Activated B cell treated with CpG ODN at 0.5 μM for 24 hours (primary cell): ENCODE measurements at regions of chr6 and their contacts with region 1.

Region 1: GRCh38 chr6:26054857-26055669 is 32.2 kb upstream of the HFE start:
- DNase-seq: peak; percentile 63
- ATAC-seq: peak; percentile 65
- H3K4me3 Mint-ChIP-seq: peak overlapping the region; percentile 97
- H3K27ac Mint-ChIP-seq: peak overlapping the region; percentile 100
- H3K4me1 Mint-ChIP-seq: peaks cover 20% of the 10 kb centered on the region
- H3K27me3 Mint-ChIP-seq: no peaks in the 10 kb centered on the region
- CTCF ChIP-seq: no peak

Region 2: GRCh38 chr6:25499615-25500235 is 555.3 kb before region 1 on chr6:
- CTCF ChIA-PET with region 1: no interaction called
- POLR2A ChIA-PET with region 1: no interaction called
- intact Hi-C with region 1: no loop called
- DNase-seq: no peak
- ATAC-seq: no peak
- H3K4me3 Mint-ChIP-seq: no peak overlapping the region
- H3K27ac Mint-ChIP-seq: no peak overlapping the region
- H3K4me1 Mint-ChIP-seq: no peaks in the 10 kb centered on the region
- H3K27me3 Mint-ChIP-seq: no peaks in the 10 kb centered on the region
- CTCF ChIP-seq: no peak

Region 3: DNA sequence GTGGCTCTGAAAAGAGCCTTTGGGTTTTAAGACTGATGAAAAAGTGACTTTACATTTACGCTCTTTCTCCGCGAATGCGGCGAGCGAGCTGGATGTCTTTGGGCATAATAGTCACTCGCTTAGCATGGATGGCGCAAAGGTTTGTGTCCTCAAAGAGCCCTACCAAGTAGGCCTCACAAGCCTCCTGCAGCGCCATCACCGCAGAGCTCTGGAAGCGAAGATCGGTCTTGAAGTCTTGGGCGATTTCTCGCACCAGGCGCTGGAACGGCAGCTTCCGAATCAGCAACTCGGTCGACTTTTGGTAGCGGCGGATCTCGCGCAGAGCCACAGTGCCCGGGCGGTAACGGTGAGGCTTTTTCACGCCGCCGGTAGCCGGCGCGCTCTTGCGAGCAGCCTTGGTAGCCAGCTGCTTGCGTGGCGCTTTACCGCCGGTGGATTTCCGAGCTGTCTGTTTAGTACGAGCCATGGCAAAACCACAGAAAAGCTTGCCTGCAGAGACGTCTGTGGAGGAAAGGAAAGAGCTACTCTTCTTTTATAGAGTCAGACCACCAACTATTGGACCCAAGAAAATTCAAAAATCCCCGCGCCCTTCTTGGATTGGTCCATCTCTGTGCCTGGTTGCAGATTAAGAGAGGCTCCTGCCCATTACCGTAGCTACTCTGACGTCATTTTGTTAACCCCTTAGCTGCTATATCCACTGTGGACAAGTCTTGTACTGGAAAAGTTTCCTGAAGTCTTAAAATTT is 23.3 kb before region 1 on chr6:
- CTCF ChIA-PET with region 1: interaction called, 7 read pairs
- POLR2A ChIA-PET with region 1: interaction called, 104 read pairs
- intact Hi-C with region 1: loop called (anchors 1 kb)
- DNase-seq: peak; percentile 55
- ATAC-seq: peak; percentile 62
- H3K4me3 Mint-ChIP-seq: peak overlapping the region; percentile 93
- H3K27ac Mint-ChIP-seq: peak overlapping the region; percentile 98
- H3K4me1 Mint-ChIP-seq: peaks cover 40% of the 10 kb centered on the region
- H3K27me3 Mint-ChIP-seq: peaks cover 2% of the 10 kb centered on the region
- CTCF ChIP-seq: no peak

Region 4: GRCh38 chr6:26087284-26088115 is 32.4 kb after region 1 on chr6 and contains the start of gene HFE:
- CTCF ChIA-PET with region 1: interaction called, 349 read pairs
- POLR2A ChIA-PET with region 1: interaction called, 37 read pairs
- intact Hi-C with region 1: no loop called
- DNase-seq: peak; percentile 46
- ATAC-seq: peak; percentile 69
- H3K4me3 Mint-ChIP-seq: peak within 1 kb of the TSS; percentile 89
- H3K27ac Mint-ChIP-seq: peak within 1 kb of the TSS; percentile 82
- H3K4me1 Mint-ChIP-seq: peaks cover 43% of the 10 kb centered on the region
- H3K27me3 Mint-ChIP-seq: no peaks in the 10 kb centered on the region
- CTCF ChIP-seq: no peak
- total RNA-seq, gene HFE: 0.98 and 1.1 TPM in 2 replicates

Region 5: DNA sequence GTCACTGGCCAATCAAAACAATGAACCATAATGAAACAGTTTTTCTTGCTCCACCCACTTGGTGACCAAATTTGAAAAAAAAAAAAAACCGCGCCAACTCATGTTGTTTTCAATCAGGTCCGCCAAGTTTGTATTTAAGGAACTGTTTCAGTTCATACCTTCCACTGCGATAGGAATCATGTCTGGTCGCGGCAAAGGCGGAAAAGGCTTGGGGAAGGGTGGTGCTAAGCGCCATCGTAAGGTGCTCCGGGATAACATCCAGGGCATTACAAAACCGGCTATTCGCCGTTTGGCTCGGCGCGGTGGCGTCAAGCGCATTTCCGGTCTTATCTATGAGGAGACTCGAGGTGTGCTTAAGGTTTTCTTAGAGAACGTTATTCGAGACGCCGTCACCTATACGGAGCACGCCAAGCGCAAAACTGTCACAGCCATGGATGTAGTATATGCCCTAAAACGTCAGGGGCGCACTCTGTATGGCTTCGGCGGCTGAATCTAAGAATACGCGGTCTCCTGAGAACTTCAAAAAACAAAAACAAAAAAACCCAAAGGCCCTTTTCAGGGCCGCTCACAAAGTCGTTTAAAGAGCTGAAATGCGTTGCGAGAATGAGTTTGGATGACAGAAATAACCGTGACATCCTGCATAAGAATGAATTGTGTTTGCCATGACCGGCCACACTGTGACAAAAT is 48.9 kb after region 1 on chr6:
- CTCF ChIA-PET with region 1: interaction called, 349 read pairs
- POLR2A ChIA-PET with region 1: interaction called, 175 read pairs
- intact Hi-C with region 1: loop called (anchors 1 kb)
- DNase-seq: peak; percentile 83
- ATAC-seq: peak; percentile 85
- H3K4me3 Mint-ChIP-seq: peak overlapping the region; percentile 85
- H3K27ac Mint-ChIP-seq: peak overlapping the region; percentile 98
- H3K4me1 Mint-ChIP-seq: peaks cover 12% of the 10 kb centered on the region
- H3K27me3 Mint-ChIP-seq: peaks cover 3% of the 10 kb centered on the region
- CTCF ChIP-seq: no peak

Region 6: DNA sequence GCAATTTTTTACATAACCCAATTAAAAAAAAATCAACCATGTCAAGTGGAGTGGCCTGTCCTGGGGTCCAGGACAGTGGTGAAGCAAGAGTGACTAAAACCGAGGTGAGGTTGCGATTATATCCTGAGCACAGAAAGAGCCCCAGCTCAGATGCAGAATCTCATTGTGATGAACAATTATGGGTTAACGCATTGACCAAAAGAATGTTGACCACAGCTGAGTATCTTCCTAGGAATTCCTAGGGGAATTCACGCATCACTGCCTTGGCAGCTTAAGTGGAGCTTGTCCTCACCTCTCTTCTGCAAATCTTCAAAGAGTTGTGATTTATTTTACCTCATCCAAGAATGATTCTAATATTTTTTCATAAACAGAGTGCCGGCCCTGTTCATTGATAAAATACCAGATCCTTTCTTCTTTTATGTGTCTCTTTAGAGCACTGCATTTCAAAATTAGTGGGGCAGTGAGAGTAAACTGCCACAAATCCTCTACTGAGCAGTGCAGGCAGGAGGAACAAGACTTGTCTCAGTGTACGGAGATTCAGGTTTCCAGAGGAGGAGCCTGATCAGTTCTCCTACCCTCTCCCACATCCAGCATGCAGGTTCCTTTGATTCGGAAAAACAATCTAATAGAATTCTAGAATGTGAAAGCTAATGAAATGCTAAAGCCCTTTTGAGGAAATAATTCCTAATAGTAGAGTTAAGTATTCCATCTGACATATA is 1477.9 kb after region 1 on chr6:
- CTCF ChIA-PET with region 1: no interaction called
- POLR2A ChIA-PET with region 1: no interaction called
- intact Hi-C with region 1: no loop called
- DNase-seq: no peak
- ATAC-seq: no peak
- H3K4me3 Mint-ChIP-seq: no peak overlapping the region
- H3K27ac Mint-ChIP-seq: no peak overlapping the region
- H3K4me1 Mint-ChIP-seq: no peaks in the 10 kb centered on the region
- H3K27me3 Mint-ChIP-seq: peaks cover 59% of the 10 kb centered on the region
- CTCF ChIP-seq: no peak

Region 7: DNA sequence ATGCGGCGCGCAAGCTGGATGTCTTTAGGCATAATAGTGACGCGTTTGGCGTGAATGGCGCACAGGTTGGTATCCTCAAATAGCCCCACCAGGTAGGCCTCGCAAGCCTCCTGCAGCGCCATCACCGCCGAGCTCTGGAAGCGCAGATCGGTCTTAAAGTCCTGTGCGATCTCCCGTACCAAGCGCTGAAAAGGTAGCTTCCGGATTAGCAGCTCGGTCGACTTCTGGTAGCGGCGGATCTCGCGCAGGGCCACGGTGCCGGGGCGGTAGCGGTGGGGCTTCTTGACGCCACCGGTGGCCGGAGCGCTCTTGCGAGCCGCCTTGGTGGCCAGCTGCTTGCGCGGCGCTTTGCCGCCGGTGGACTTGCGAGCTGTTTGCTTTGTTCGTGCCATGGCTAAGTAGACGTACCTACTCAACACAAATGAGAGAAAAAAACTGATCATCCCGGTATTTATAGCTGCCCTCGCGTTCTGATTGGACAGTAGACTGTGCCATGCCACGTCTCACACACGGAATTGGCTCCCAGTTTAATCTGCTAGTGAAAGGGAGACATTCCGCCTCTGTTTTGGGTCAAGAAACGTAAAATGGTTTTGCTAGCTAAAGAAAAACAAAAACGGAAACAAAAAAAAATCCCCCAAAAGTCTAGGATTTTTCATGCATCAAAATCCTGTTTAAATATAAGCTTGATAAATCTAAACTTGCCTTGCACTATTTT is 1817.0 kb after region 1 on chr6:
- CTCF ChIA-PET with region 1: no interaction called
- POLR2A ChIA-PET with region 1: interaction called, 17 read pairs
- intact Hi-C with region 1: no loop called
- DNase-seq: peak; percentile 73
- ATAC-seq: peak; percentile 80
- H3K4me3 Mint-ChIP-seq: peak overlapping the region; percentile 94
- H3K27ac Mint-ChIP-seq: peak overlapping the region; percentile 95
- H3K4me1 Mint-ChIP-seq: peaks cover 36% of the 10 kb centered on the region
- H3K27me3 Mint-ChIP-seq: no peaks in the 10 kb centered on the region
- CTCF ChIP-seq: no peak